Ascending aorta (tissue), 2 donors: ENCODE measurements at regions of chr6 and their contacts with region 1.

Region 1: GRCh38 chr6:136643850-136644596 is 93.8 kb upstream of the MAP7 start:
- DNase-seq: peak; percentile 76 to 98
- H3K4me3 ChIP-seq: no peak overlapping the region
- H3K27ac ChIP-seq: peak overlapping the region; percentile 61 to 80
- H3K4me1 ChIP-seq: peaks cover 0 to 40% of the 10 kb centered on the region in 2 donors
- H3K27me3 ChIP-seq: no peaks in the 10 kb centered on the region
- CTCF ChIP-seq: peak; percentile 87 to 92 (median 87)

Region 2: DNA sequence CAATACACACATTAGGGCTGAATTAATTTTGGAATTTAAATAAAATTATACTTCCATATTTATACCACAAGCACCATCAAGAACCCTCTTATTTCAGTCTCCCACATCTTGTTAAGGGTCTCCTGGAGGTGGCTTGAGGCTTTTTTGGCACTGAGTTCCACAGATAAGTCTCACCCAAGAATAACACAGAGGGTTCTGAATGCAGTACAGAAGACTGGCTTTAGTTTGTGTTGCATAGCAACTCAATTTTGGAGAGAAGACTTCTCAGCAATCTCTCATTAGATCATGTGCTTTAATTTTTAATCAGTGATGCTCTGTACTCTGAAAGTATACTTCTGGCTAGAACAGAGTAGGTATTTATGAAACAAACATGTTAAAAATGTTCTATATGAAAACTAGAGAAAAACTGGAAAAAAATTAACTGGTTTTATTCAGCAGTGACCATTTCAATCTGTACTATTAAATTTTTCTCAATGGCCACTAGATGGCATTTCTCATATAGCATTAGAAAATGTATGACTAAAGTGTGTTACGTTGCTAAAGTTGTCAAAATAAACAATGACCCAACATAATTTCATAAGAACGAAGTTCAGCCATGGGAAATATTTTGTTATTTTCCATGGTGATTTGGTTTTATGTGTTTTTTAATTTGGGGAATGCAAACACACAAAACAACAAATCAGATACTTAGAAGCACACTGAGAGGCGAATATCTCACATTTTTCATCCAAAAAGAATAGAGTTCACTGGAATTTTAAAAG is 61.1 kb before region 1 on chr6:
- intact Hi-C with region 1: loop called (anchors 1 kb)
- DNase-seq: no peak
- H3K4me3 ChIP-seq: no peak overlapping the region
- H3K27ac ChIP-seq: peak overlapping the region; percentile 81 to 86
- H3K4me1 ChIP-seq: peaks cover 5 to 42% of the 10 kb centered on the region in 2 donors
- H3K27me3 ChIP-seq: no peaks in the 10 kb centered on the region
- CTCF ChIP-seq: peak; percentile 50 to 65 (median 63)

Region 3: GRCh38 chr6:136607932-136608772 is 35.9 kb before region 1 on chr6:
- intact Hi-C with region 1: loop called (anchors 2 kb)
- DNase-seq: peak in 1 of 2 donors; percentile 84
- H3K4me3 ChIP-seq: no peak overlapping the region
- H3K27ac ChIP-seq: peak overlapping the region; percentile 79 to 87
- H3K4me1 ChIP-seq: peaks cover 8 to 20% of the 10 kb centered on the region in 2 donors
- H3K27me3 ChIP-seq: no peaks in the 10 kb centered on the region
- CTCF ChIP-seq: peak; percentile 60 to 76 (median 68)

Region 4: GRCh38 chr6:136614994-136615393 is 29.0 kb before region 1 on chr6:
- intact Hi-C with region 1: loop called (anchors 2 kb)
- DNase-seq: no peak
- H3K4me3 ChIP-seq: no peak overlapping the region
- H3K27ac ChIP-seq: peak overlapping the region; percentile 21 to 36
- H3K4me1 ChIP-seq: peaks cover 0 to 4% of the 10 kb centered on the region in 2 donors
- H3K27me3 ChIP-seq: no peaks in the 10 kb centered on the region
- CTCF ChIP-seq: no peak

Region 5: GRCh38 chr6:136685540-136686108 is 41.6 kb after region 1 on chr6:
- intact Hi-C with region 1: loop called (anchors 2 kb)
- DNase-seq: no peak
- H3K4me3 ChIP-seq: no peak overlapping the region
- H3K27ac ChIP-seq: peak overlapping the region; percentile 43 to 68
- H3K4me1 ChIP-seq: peaks cover 4 to 27% of the 10 kb centered on the region in 2 donors
- H3K27me3 ChIP-seq: no peaks in the 10 kb centered on the region
- CTCF ChIP-seq: no peak

Region 6: DNA sequence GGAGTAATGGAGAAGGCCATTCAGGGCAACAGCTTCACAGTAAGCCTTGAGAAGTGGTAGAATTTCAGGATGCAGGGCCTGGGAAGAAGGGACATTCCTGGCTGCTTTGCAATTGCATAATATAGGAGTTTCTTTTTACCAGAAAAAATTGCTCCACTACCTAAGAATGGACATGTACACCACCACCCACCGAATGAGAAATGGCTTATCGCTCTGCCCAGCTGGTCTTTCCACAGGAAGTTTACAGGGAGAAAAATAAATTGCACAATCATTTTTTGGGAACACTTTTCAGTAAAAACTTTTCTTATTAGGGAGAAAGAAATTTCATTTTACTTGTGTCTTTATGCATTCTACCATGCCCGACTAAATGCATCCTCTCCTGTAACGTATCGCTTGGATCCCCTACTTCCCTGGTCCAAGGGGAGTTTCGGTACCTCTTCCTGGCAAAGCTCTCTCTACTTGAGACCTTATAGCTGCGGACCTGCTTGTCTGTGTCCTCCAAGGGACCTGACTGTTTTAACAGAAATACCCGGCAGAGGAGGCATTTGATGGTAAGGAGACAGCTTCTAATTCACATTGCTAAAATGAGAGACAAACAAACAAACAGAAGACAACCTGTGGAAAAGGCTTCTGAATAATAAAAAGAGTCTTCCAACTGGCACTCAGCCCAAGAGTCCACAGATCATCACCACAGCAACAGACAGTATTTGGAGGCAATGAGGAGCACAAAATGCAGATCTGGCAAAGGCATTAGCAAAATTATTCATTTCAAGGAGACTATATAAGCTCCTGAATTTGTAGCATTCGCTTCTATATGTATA is 94.1 kb after region 1 on chr6:
- intact Hi-C with region 1: loop called (anchors 5 kb)
- DNase-seq: peak in 1 of 2 donors; percentile 77
- H3K4me3 ChIP-seq: peak overlapping the region in 1 of 2 donors; percentile 12
- H3K27ac ChIP-seq: peak overlapping the region; percentile 78 to 82
- H3K4me1 ChIP-seq: peaks cover 8 to 47% of the 10 kb centered on the region in 2 donors
- H3K27me3 ChIP-seq: no peaks in the 10 kb centered on the region
- CTCF ChIP-seq: no peak

Region 7: GRCh38 chr6:136840276-136841001 is 196.4 kb after region 1 on chr6:
- intact Hi-C with region 1: no loop called
- DNase-seq: no peak
- H3K4me3 ChIP-seq: no peak overlapping the region
- H3K27ac ChIP-seq: no peak overlapping the region
- H3K4me1 ChIP-seq: no peaks in the 10 kb centered on the region
- H3K27me3 ChIP-seq: no peaks in the 10 kb centered on the region
- CTCF ChIP-seq: no peak